Endothelial cell of umbilical vein (primary cell): ENCODE measurements at regions of chr1 and their contacts with region 1.

Region 1: GRCh38 chr1:8015036-8015808 is 10.9 kb downstream of the ERRFI1 start:
- DNase-seq: peak; percentile 93
- H3K4me3 ChIP-seq: no peak overlapping the region
- H3K27ac ChIP-seq: peak overlapping the region; percentile 54
- H3K4me1 ChIP-seq: peaks cover 52% of the 10 kb centered on the region
- H3K27me3 ChIP-seq: no peaks in the 10 kb centered on the region
- CTCF ChIP-seq: peak; percentile 58 to 62
- POLR2A ChIP-seq: no peak

Region 2: DNA sequence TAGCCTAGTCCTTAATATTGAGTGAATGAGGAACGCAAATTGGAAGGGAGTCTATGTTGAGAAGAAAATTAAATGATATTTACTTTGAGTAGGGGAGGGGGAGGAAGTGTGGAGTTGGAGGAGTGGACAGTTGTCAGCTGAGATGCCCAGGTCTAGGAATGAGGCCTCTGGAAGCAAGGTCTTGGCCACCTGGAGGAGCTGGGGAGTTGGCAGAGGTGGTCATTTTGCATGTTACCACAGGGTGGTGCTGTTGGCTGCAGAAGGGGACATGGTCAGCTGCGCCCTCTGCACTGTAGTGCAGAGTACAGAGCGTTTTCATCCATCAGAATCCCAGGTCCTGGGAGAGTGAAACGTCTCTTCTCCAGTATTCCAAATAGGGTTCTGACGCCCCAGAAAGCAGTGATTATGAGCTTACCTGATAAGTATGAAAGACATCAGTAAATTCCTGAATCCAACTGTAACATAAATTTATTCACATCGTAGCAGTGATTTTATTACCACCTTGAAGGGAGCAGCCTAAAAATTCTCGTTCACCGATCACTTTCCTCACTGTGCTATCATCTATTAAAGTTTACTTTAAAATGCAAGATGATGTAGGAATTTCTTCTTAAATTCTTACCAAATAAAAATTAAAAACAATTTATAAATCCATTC is 39.9 kb before region 1 on chr1:
- CTCF ChIA-PET with region 1: interaction called, 92 read pairs
- POLR2A ChIA-PET with region 1: no interaction called
- dilution Hi-C with region 1: no loop called
- intact Hi-C with region 1: loop called (anchors 2 kb)
- DNase-seq: peak; percentile 81
- H3K4me3 ChIP-seq: no peak overlapping the region
- H3K27ac ChIP-seq: no peak overlapping the region
- H3K4me1 ChIP-seq: no peaks in the 10 kb centered on the region
- H3K27me3 ChIP-seq: no peaks in the 10 kb centered on the region
- CTCF ChIP-seq: peak; percentile 85 to 94
- POLR2A ChIP-seq: no peak

Region 3: GRCh38 chr1:8004803-8005554 is 10.2 kb before region 1 on chr1:
- CTCF ChIA-PET with region 1: interaction called, 24 read pairs
- POLR2A ChIA-PET with region 1: no interaction called
- dilution Hi-C with region 1: no loop called
- intact Hi-C with region 1: no loop called
- DNase-seq: peak; percentile 71
- H3K4me3 ChIP-seq: no peak overlapping the region
- H3K27ac ChIP-seq: peak overlapping the region; percentile 65
- H3K4me1 ChIP-seq: peaks cover 20% of the 10 kb centered on the region
- H3K27me3 ChIP-seq: no peaks in the 10 kb centered on the region
- CTCF ChIP-seq: no peak
- POLR2A ChIP-seq: no peak

Region 4: DNA sequence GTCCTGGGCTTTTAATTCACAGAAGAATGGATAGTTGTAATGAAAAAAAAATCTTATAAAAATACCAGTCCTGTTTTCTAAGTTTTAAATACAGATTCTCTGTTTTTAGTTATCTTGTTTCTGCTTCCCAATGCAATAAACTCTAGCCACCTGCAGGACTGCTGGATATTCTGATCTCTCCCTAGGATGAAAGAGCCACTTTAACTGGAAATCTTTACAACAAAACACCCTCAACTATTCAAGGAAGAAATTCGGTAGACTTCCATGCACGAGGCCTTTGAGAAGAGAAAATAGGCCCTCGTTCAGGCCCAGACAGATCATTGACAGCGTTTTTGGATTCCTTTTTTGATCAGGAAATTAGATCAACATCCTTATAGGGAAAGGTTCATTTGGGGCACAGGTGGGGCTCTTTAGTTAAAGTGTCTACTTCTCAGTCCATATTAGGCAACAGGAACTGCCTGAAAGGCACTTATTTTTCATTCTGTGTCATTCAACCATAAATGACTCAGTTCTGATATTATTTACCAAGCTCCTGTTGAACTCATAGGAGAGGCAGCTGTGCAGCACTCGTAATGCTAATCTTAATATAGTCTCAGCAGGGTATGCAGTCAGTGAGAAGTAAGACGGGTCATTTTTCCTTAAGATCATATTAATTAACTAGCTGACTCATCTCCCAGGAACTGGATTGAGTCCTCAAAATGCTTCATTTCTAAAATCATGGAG is 82.0 kb after region 1 on chr1:
- CTCF ChIA-PET with region 1: interaction called, 11 read pairs
- POLR2A ChIA-PET with region 1: interaction called, 6 read pairs
- dilution Hi-C with region 1: no loop called
- intact Hi-C with region 1: no loop called
- DNase-seq: peak; percentile 94
- H3K4me3 ChIP-seq: peak overlapping the region in 1 of 3 experiments; percentile 20
- H3K27ac ChIP-seq: peak overlapping the region; percentile 98
- H3K4me1 ChIP-seq: peaks cover 49% of the 10 kb centered on the region
- H3K27me3 ChIP-seq: no peaks in the 10 kb centered on the region
- CTCF ChIP-seq: no peak
- POLR2A ChIP-seq: no peak

Region 5: GRCh38 chr1:8137481-8138244 is 122.4 kb after region 1 on chr1:
- CTCF ChIA-PET with region 1: interaction called, 11 read pairs
- POLR2A ChIA-PET with region 1: no interaction called
- dilution Hi-C with region 1: no loop called
- intact Hi-C with region 1: no loop called
- DNase-seq: peak; percentile 97
- H3K4me3 ChIP-seq: no peak overlapping the region
- H3K27ac ChIP-seq: peak overlapping the region; percentile 81
- H3K4me1 ChIP-seq: peaks cover 39% of the 10 kb centered on the region
- H3K27me3 ChIP-seq: no peaks in the 10 kb centered on the region
- CTCF ChIP-seq: no peak
- POLR2A ChIP-seq: no peak

Region 6: GRCh38 chr1:8307628-8308027 is 292.4 kb after region 1 on chr1:
- CTCF ChIA-PET with region 1: interaction called, 21 read pairs
- POLR2A ChIA-PET with region 1: no interaction called
- dilution Hi-C with region 1: loop called (anchors 10 kb)
- intact Hi-C with region 1: no loop called
- DNase-seq: no peak
- H3K4me3 ChIP-seq: no peak overlapping the region
- H3K27ac ChIP-seq: no peak overlapping the region
- H3K4me1 ChIP-seq: no peaks in the 10 kb centered on the region
- H3K27me3 ChIP-seq: no peaks in the 10 kb centered on the region
- CTCF ChIP-seq: no peak
- POLR2A ChIP-seq: no peak